ENCODE measurements at regions of chr2 and their contacts with region 1.

Region 1: DNA sequence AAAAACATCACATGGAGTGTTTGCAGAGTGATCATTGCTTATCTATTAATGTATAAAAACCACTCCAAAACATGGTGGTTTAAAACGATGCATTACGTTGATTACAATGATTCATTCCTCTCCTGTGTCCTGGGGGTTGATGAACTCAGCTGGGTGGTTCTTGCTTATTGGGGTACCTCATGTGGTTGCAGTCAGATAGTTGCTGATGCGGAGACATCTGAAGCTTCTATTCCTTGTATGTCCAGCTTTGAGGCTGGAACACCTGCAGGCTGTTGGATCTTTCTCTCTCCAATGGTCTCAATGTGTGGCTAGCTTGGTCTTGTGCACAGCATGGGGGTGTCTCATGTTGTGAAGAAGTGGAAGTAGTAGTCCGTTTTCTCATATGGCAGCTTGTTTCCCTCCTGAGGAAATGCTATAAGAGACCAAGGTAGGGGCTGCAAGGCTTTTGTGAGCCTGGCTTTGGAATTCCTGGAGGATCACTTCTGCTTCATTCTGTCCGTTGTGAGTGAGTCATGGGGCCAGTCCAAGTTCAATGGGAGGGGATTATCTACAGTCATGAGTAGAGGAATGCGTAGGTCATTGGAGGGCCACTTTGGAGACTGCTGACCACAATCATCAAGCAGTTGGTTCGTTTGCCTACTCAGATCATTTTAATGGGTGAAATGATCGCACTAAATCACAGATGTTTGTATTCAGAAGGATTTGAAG is 601.0 kb downstream of the SLC4A3 start:
- DNase-seq: peak; percentile 91
- H3K4me3 ChIP-seq: no peak overlapping the region
- H3K27ac ChIP-seq: peak overlapping the region; percentile 37
- H3K4me1 ChIP-seq: peaks cover 52% of the 10 kb centered on the region
- H3K27me3 ChIP-seq: no peaks in the 10 kb centered on the region
- CTCF ChIP-seq: no peak

Region 2: DNA sequence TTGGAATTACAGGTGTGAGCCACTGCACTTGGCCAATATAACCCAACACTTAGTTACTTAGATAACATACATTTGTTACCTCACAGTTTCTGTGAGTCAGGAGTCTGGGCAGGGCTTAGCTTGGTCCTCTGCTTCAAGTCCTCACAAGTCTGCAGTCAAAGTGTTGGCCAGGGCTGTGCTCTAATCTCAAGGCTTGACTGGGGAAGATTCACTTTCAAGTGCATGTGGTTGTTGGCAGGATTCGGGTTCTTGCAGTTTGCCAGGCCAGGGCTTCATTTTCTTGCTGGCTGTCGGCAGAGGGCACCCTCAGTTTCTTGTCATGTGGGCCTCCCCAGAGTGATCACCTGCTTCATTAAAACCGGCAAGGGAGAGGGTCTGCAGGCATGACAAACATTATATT is 497.3 kb before region 1 on chr2:
- CTCF ChIA-PET with region 1: no interaction called
- dilution Hi-C with region 1: no loop called
- in situ Hi-C with region 1: no loop called
- intact Hi-C with region 1: loop called (anchors 5 kb)
- DNase-seq: peak; percentile 77
- H3K4me3 ChIP-seq: no peak overlapping the region
- H3K27ac ChIP-seq: no peak overlapping the region
- H3K4me1 ChIP-seq: peaks cover 12% of the 10 kb centered on the region
- H3K27me3 ChIP-seq: no peaks in the 10 kb centered on the region
- CTCF ChIP-seq: no peak

Region 3: GRCh38 chr2:220353897-220354296 is 125.4 kb after region 1 on chr2:
- CTCF ChIA-PET with region 1: no interaction called
- dilution Hi-C with region 1: no loop called
- in situ Hi-C with region 1: no loop called
- intact Hi-C with region 1: no loop called
- DNase-seq: peak; percentile 75
- H3K4me3 ChIP-seq: no peak overlapping the region
- H3K27ac ChIP-seq: no peak overlapping the region
- H3K4me1 ChIP-seq: peaks cover 23% of the 10 kb centered on the region
- H3K27me3 ChIP-seq: no peaks in the 10 kb centered on the region
- CTCF ChIP-seq: no peak

Measured in mammary epithelial cell (primary cell).